ENCODE measurements at regions of chr13 and their contacts with region 1.

Region 1: GRCh38 chr13:48334534-48335127 is 31.1 kb downstream of the RB1 start:
- DNase-seq: no peak
- H3K4me3 ChIP-seq: no peak overlapping the region
- H3K27ac ChIP-seq: no peak overlapping the region
- H3K4me1 ChIP-seq: no peaks in the 10 kb centered on the region
- H3K27me3 ChIP-seq: no peaks in the 10 kb centered on the region
- CTCF ChIP-seq: peak; percentile 44 to 56 (median 53)
- EP300 ChIP-seq: no peak
- POLR2A ChIP-seq: no peak

Region 2: DNA sequence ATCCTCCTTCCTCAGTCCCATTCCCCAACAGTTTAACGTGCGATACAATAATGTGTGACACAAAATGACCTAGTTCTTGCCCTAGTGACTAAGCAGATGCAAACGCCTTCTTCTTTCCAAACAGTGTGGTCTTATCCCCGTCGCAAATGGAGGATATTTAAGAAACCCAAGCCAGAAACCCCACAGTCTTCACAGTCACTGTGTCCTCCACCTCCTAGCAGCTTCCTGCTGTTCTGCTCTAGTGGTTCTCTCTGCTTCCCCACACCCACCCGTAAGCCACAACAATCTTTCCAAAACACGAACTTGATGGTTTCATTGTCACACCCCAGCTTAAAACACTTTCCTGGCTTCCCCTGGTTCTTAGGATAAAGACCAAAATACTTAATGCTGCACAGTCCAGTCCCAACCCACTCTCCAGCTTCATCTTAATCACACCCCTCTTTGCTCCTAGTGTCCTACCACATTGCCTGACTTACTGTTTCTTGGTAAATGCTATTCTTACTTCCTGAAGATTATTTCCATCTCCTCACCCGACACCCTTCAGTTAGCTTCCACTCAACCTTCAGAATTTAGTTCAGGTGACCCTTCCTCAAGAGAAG is 69.3 kb before region 1 on chr13:
- in situ Hi-C with region 1: no loop called
- intact Hi-C with region 1: no loop called
- DNase-seq: peak; percentile 9
- H3K4me3 ChIP-seq: no peak overlapping the region
- H3K27ac ChIP-seq: no peak overlapping the region
- H3K4me1 ChIP-seq: peaks cover 0 to 7% (median 0%) of the 10 kb centered on the region in 4 donors
- H3K27me3 ChIP-seq: no peaks in the 10 kb centered on the region
- CTCF ChIP-seq: no peak
- EP300 ChIP-seq: no peak
- POLR2A ChIP-seq: no peak

Region 3: GRCh38 chr13:48412881-48413351 is 78.3 kb after region 1 on chr13 and contains the start of gene LPAR6:
- in situ Hi-C with region 1: no loop called
- intact Hi-C with region 1: no loop called
- DNase-seq: no peak
- H3K4me3 ChIP-seq: peak within 1 kb of the TSS; percentile 29 to 54 (median 38)
- H3K27ac ChIP-seq: peak within 1 kb of the TSS; percentile 73 to 90 (median 82)
- H3K4me1 ChIP-seq: peaks cover 0 to 18% (median 5%) of the 10 kb centered on the region in 4 donors
- H3K27me3 ChIP-seq: no peaks in the 10 kb centered on the region
- CTCF ChIP-seq: no peak
- EP300 ChIP-seq: no peak
- POLR2A ChIP-seq: peak; percentile 75
- total RNA-seq, gene LPAR6: 2.2 to 34.6 (median 15.9) TPM

Region 4: GRCh38 chr13:48580185-48580803 is 245.7 kb after region 1 on chr13:
- in situ Hi-C with region 1: loop called in 3 of 4 experiments (anchors 5 to 25 kb)
- intact Hi-C with region 1: no loop called
- DNase-seq: peak; percentile 84
- H3K4me3 ChIP-seq: no peak overlapping the region
- H3K27ac ChIP-seq: peak overlapping the region; percentile 1 to 50 (median 18)
- H3K4me1 ChIP-seq: peaks cover under 1 to 23% (median 11%) of the 10 kb centered on the region in 4 donors
- H3K27me3 ChIP-seq: no peaks in the 10 kb centered on the region
- CTCF ChIP-seq: peak; percentile 65 to 82 (median 76)
- EP300 ChIP-seq: no peak
- POLR2A ChIP-seq: no peak

Region 5: GRCh38 chr13:48653472-48653939 is 318.9 kb after region 1 on chr13 and contains the start of gene CYSLTR2:
- in situ Hi-C with region 1: no loop called
- intact Hi-C with region 1: no loop called
- DNase-seq: no peak
- H3K4me3 ChIP-seq: peak within 1 kb of the TSS in 1 of 4 donors; percentile 19
- H3K27ac ChIP-seq: peak within 1 kb of the TSS in 2 of 4 donors; percentile 32 to 49
- H3K4me1 ChIP-seq: peaks cover 0 to 10% (median 0%) of the 10 kb centered on the region in 4 donors
- H3K27me3 ChIP-seq: no peaks in the 10 kb centered on the region
- CTCF ChIP-seq: no peak
- EP300 ChIP-seq: no peak
- POLR2A ChIP-seq: no peak
- total RNA-seq, gene CYSLTR2: 0.14 to 0.16 TPM in 2 of 4 donors, not detected in the others